ENCODE measurements at regions of chr14 and their contacts with region 1.

Region 1: GRCh38 chr14:21383848-21384493 is at the start of gene SUPT16H:
- DNase-seq: peak; percentile 99
- H3K4me3 ChIP-seq: peak within 1 kb of the TSS; percentile 73 to 90 (median 82)
- H3K27ac ChIP-seq: peak within 1 kb of the TSS; percentile 85 to 95 (median 90)
- H3K4me1 ChIP-seq: peaks cover 24 to 59% (median 52%) of the 10 kb centered on the region in 6 donors
- H3K27me3 ChIP-seq: no peaks in the 10 kb centered on the region
- CTCF ChIP-seq: peak in 6 of 11 experiments; percentile 10 to 58 (median 30)
- POLR2A ChIP-seq: peak in 1 of 3 donors; percentile 36
- total RNA-seq, gene SUPT16H: 53.1 to 65.3 (median 58.0) TPM

Region 2: DNA sequence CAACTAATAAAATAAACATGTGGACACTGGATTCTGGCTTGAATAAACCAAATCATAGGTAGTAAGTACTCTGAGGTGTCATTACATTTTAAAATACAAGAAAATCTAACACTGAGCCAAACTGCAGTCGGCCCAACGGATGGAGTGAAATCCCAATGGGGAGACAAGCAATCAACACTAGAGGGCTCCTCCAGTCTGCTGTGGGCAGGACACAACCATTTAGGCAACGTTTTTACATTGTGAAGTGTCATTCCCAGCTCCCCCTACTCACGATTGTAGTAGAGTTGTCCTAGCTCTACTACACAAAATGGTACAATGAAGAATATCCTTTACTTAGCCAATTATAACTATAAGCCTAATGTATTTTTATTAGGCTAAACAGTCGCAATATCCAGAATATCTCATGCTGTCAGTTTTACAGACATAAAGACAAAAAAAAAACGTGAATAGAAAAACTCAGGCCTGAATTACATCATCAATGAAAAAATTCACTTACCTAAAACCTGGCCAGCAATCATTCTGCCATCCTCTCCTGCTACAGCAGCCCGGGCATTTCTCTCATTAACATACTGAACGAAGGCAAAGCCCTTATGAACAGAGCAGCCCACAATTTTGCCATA is 150.4 kb before region 1 on chr14:
- intact Hi-C with region 1: loop called (anchors 10 kb)
- DNase-seq: no peak
- H3K4me3 ChIP-seq: no peak overlapping the region
- H3K27ac ChIP-seq: peak overlapping the region in 1 of 8 donors; percentile 10
- H3K4me1 ChIP-seq: peaks cover 30 to 100% (median 92%) of the 10 kb centered on the region in 6 donors
- H3K27me3 ChIP-seq: no peaks in the 10 kb centered on the region
- CTCF ChIP-seq: peak in 2 of 11 experiments; percentile 17 to 20
- POLR2A ChIP-seq: no peak

Region 3: GRCh38 chr14:21269252-21270046 is 114.5 kb before region 1 on chr14 and contains the start of gene HNRNPC:
- intact Hi-C with region 1: loop called (anchors 10 kb)
- DNase-seq: peak; percentile 100
- H3K4me3 ChIP-seq: peak within 1 kb of the TSS; percentile 55 to 88 (median 71)
- H3K27ac ChIP-seq: peak within 1 kb of the TSS; percentile 93 to 98 (median 96)
- H3K4me1 ChIP-seq: peaks cover 23 to 55% (median 48%) of the 10 kb centered on the region in 6 donors
- H3K27me3 ChIP-seq: no peaks in the 10 kb centered on the region
- CTCF ChIP-seq: peak in 3 of 11 experiments; percentile 8 to 31 (median 27)
- POLR2A ChIP-seq: peak in 2 of 3 donors; percentile 90
- total RNA-seq, gene HNRNPC: 374 to 648 (median 506) TPM

Region 4: GRCh38 chr14:21589317-21589716 is 205.3 kb after region 1 on chr14:
- intact Hi-C with region 1: no loop called
- DNase-seq: no peak
- H3K4me3 ChIP-seq: no peak overlapping the region
- H3K27ac ChIP-seq: no peak overlapping the region
- H3K4me1 ChIP-seq: no peaks in the 10 kb centered on the region
- H3K27me3 ChIP-seq: peaks cover 0 to 18% (median 0%) of the 10 kb centered on the region in 7 donors
- CTCF ChIP-seq: no peak
- POLR2A ChIP-seq: no peak

Region 5: GRCh38 chr14:21987937-21988336 is 604.0 kb after region 1 on chr14:
- intact Hi-C with region 1: no loop called
- DNase-seq: no peak
- H3K4me3 ChIP-seq: no peak overlapping the region
- H3K27ac ChIP-seq: no peak overlapping the region
- H3K4me1 ChIP-seq: no peaks in the 10 kb centered on the region
- H3K27me3 ChIP-seq: peaks cover 0 to 29% (median 0%) of the 10 kb centered on the region in 7 donors
- CTCF ChIP-seq: peak in 3 of 11 experiments; percentile 15 to 19 (median 18)
- POLR2A ChIP-seq: no peak